ENCODE measurements at regions of chr10 and their contacts with region 1.

Region 1: DNA sequence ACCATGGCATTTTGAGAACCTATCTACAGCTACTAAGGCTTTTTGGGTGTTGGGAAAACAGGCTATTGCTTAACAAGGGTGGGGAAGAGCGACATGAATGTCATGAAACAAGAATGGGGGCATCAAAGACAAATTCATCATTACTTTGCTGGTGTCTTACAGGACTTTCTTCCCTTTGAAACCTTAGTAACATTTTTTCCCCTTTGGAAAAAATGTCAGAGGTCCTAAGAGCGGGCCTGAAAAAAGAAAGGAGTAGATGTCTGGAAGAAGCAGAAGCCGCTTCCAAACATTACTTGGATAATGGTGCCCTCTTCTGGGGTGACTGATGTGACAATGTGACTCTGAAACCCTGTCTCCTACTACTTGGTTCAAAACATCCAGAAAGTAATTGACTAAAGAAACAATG is 3.8 kb upstream of the DDX50 start:
- DNase-seq: no peak
- ATAC-seq: no peak

Region 2: DNA sequence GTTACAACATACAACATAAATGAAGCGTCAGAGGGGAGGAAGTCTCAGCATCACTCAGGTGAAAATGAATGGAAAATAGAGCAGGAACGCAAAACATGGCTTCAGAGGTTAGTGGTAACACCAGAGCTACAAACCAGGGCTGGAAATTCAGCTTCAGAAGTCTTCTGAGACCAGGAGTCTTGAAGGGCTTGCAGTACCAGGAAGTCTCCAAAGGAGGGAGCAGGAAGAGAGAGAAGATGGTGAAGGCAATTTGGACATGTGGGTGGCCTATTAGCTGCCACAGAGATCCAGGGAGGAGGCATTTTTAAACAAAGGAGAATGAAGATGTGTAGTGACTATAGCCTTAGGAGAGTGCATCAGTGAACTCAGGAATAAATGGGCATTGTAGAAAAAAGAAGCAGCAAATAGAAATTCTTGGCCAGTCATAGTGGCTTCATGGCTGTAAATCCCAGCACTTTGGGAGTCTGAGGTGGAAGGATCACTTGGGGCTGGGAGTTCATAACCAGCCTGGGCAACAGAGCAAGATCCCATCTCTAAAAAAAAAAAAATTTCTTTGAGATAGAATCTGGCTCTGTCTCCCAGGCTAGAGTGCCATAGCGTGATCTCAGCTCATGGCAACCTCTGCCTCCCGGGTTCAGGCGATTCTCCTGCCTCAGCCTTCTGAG is 346.5 kb before region 1 on chr10:
- intact Hi-C with region 1: loop called in 1 of 2 experiments (anchors 5 kb)
- DNase-seq: no peak
- ATAC-seq: peak; percentile 61 to 73

Region 3: DNA sequence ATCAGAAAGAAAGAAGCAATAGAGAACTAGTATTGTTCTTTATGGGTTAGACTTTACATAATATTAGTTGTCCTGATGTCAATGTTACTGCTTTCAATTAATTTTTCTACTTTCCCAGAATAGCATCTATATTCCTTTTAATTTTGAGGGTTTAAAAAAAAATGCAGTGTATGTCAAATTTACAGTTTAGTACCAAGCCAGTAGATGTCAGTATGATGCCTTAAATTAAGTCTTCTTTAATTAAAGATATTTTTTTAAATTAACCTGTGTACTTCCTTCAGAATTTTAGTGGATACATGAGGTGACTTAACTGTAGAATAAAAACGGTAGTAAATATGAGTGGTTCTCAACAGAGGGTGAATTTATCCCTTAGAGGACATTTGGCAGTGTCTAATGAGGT is 105.2 kb before region 1 on chr10:
- intact Hi-C with region 1: loop called (anchors 5 to 10 kb)
- DNase-seq: no peak
- ATAC-seq: no peak